Aorta (tissue), 5 donors: ENCODE measurements at regions of chr1 and their contacts with region 1.

Region 1: DNA sequence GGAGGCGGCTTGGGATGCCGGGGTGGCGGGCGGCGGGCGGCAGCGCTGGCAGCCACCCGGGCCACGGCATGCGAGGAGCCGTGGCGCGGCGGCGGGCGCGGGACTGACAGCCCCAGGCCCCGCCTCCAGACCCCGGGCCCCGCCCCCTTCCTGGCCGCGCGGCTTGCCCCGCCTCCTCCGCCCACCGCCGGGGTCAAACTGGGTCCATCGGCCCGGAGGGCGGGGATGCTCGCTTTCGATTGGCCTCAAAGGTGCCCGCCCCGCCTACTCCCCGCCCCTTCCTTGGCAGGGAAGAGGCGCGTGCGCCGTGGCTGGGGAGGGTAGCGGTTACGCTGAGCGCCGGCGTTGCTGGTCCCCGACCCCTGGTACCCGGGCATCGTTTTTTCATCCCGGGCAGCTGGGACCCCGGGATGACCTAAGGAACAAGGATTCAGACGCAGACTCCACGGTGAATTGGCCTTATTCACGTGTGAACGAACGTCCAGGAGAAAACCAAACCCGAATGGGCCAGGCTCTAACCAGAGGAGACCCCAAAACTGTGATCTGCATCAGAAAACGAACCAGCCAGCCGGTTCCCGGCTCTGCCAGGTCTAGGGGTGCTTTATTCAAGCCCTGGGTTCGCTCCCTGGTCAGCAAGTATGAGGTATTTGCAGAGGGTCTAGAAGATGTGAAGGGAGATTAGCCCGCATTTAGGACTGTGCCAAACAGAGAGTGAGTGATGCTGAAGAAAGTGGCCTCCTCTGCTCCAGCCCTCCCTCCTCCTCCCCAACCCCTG is 117.2 kb upstream of the GUCA2B start:
- DNase-seq: peak; percentile 98 to 99
- ATAC-seq: peak; percentile 97
- H3K4me3 ChIP-seq: peak overlapping the region; percentile 69 to 92
- H3K27ac ChIP-seq: no peak overlapping the region
- H3K4me1 ChIP-seq: peaks cover 0 to 4% of the 10 kb centered on the region in 2 donors
- H3K27me3 ChIP-seq: no peaks in the 10 kb centered on the region

Region 2: GRCh38 chr1:41662061-41662764 is 373.8 kb before region 1 on chr1:
- intact Hi-C with region 1: loop called in 1 of 2 experiments (anchors 2 kb)
- DNase-seq: peak; percentile 89 to 94
- ATAC-seq: peak; percentile 72
- H3K4me3 ChIP-seq: peak overlapping the region; percentile 62 to 77
- H3K27ac ChIP-seq: peak overlapping the region; percentile 57 to 78
- H3K4me1 ChIP-seq: peaks cover 0 to 3% of the 10 kb centered on the region in 2 donors
- H3K27me3 ChIP-seq: no peaks in the 10 kb centered on the region

Region 3: DNA sequence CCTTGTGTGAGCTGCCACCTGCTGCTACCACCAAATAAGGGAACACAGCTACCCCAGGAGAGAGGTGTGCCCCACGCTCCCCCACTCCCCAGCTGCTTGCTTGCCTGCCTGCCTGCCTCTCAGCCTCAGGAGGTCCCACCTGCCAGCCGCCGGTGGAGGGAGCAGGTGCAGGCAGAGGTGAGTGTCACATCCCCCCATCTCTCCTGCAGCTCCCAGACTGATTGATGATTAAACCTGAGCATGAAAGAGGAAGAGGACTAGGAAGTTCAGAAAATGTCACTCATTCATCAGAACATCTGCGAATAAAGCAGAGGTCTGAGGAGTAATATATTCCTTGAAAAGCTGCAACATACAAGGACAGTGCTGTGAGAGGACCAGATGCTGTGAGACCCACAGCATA is 58.7 kb before region 1 on chr1:
- intact Hi-C with region 1: no loop called
- DNase-seq: no peak
- ATAC-seq: no peak
- H3K4me3 ChIP-seq: no peak overlapping the region
- H3K27ac ChIP-seq: no peak overlapping the region
- H3K4me1 ChIP-seq: no peaks in the 10 kb centered on the region
- H3K27me3 ChIP-seq: no peaks in the 10 kb centered on the region

Region 4: DNA sequence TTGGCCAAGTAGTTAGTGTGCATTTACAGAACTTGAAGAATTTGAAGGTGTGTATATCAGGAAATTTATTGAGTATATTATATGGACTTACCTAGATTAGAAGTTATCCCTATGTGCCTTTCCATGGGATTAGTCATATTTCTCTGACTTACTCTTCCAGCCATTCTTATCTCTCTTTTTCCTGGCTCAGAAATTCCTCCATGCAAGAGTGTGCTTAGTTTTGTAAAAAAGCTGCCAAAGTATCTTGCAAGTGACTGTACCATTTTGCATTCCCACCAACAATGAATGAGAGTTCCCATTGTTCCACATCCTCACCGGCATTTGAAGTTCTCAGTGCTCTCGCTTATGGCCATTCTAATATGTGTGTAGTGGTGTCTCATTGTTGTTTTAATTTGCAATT is 35.0 kb after region 1 on chr1:
- intact Hi-C with region 1: no loop called
- DNase-seq: no peak
- ATAC-seq: no peak
- H3K4me3 ChIP-seq: no peak overlapping the region
- H3K27ac ChIP-seq: no peak overlapping the region
- H3K4me1 ChIP-seq: no peaks in the 10 kb centered on the region
- H3K27me3 ChIP-seq: no peaks in the 10 kb centered on the region